Sigmoid colon (tissue), 7 donors: ENCODE measurements at regions of chr3 and their contacts with region 1.

Region 1: GRCh38 chr3:46089237-46090011 is 62.1 kb upstream of the XCR1 start:
- DNase-seq: peak; percentile 84
- H3K4me3 ChIP-seq: no peak overlapping the region
- H3K27ac ChIP-seq: peak overlapping the region; percentile 27 to 62 (median 38)
- H3K4me1 ChIP-seq: no peaks in the 10 kb centered on the region
- H3K27me3 ChIP-seq: no peaks in the 10 kb centered on the region
- CTCF ChIP-seq: no peak
- EP300 ChIP-seq: peak in 1 of 4 donors; percentile 57
- POLR2A ChIP-seq: no peak

Region 2: DNA sequence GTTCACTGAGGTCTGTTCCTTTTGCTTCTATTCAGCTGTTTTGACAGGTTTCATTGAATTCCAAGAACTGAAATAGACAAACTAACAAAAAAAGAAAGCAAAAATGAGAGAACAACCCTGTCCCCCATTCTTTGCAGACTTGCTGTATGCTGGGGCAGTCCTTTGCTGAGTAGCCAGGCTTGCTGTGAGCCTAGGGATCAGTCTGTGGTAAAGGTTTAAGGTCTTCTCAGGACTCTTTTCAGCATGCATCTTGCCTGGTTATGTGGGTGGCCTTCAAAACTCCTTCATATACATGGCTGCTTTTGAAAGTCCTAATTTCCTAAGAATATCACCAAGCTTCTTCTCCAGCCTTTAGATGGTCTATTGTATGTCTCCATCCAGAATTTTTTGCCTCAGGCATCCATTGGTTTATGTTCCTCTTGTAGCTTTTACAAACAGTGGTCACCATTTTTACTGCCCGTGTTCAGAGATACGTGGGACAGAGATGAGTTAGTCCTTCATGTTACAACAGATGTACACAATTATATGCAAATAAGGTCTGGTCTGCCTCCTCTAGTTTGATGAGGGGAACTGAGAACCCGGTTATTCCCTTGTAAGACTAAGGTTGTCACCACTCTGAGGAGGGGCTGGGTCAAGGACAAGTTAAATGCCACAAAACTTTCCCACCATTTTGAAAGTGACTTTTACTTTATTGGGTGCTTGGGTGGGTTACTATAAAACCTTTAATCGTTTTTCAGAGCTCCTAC is 358.8 kb before region 1 on chr3:
- intact Hi-C with region 1: no loop called
- DNase-seq: no peak
- H3K4me3 ChIP-seq: no peak overlapping the region
- H3K27ac ChIP-seq: no peak overlapping the region
- H3K4me1 ChIP-seq: no peaks in the 10 kb centered on the region
- H3K27me3 ChIP-seq: no peaks in the 10 kb centered on the region
- CTCF ChIP-seq: no peak
- EP300 ChIP-seq: no peak
- POLR2A ChIP-seq: no peak

Region 3: GRCh38 chr3:45958321-45958791 is 131.1 kb before region 1 on chr3:
- intact Hi-C with region 1: no loop called
- DNase-seq: no peak
- H3K4me3 ChIP-seq: no peak overlapping the region
- H3K27ac ChIP-seq: peak overlapping the region in 3 of 4 donors; percentile 39 to 72 (median 64)
- H3K4me1 ChIP-seq: peaks cover 0 to 18% (median 6%) of the 10 kb centered on the region in 4 donors
- H3K27me3 ChIP-seq: no peaks in the 10 kb centered on the region
- CTCF ChIP-seq: no peak
- EP300 ChIP-seq: no peak
- POLR2A ChIP-seq: no peak

Region 4: GRCh38 chr3:46378426-46378942 is 289.1 kb after region 1 on chr3:
- intact Hi-C with region 1: loop called (anchors 10 kb)
- DNase-seq: peak; percentile 73
- H3K4me3 ChIP-seq: no peak overlapping the region
- H3K27ac ChIP-seq: no peak overlapping the region
- H3K4me1 ChIP-seq: peaks cover 0 to 15% (median 3%) of the 10 kb centered on the region in 4 donors
- H3K27me3 ChIP-seq: no peaks in the 10 kb centered on the region
- CTCF ChIP-seq: peak in 2 of 4 experiments; percentile 30 to 40
- EP300 ChIP-seq: no peak
- POLR2A ChIP-seq: no peak

Region 5: GRCh38 chr3:46442576-46443562 is 353.4 kb after region 1 on chr3:
- intact Hi-C with region 1: loop called (anchors 10 kb)
- DNase-seq: no peak
- H3K4me3 ChIP-seq: no peak overlapping the region
- H3K27ac ChIP-seq: no peak overlapping the region
- H3K4me1 ChIP-seq: no peaks in the 10 kb centered on the region
- H3K27me3 ChIP-seq: no peaks in the 10 kb centered on the region
- CTCF ChIP-seq: peak in 2 of 4 experiments; percentile 66 to 72
- EP300 ChIP-seq: no peak
- POLR2A ChIP-seq: no peak

Region 6: GRCh38 chr3:46695177-46695961 is 605.9 kb after region 1 on chr3:
- intact Hi-C with region 1: no loop called
- DNase-seq: peak; percentile 83
- H3K4me3 ChIP-seq: no peak overlapping the region
- H3K27ac ChIP-seq: peak overlapping the region; percentile 57 to 79 (median 64)
- H3K4me1 ChIP-seq: peaks cover 0 to 62% (median 50%) of the 10 kb centered on the region in 4 donors
- H3K27me3 ChIP-seq: peaks cover 0 to under 1% (median 0%) of the 10 kb centered on the region in 3 donors
- CTCF ChIP-seq: no peak
- EP300 ChIP-seq: no peak
- POLR2A ChIP-seq: no peak